IMR-90 (cell line): ENCODE measurements at regions of chr14 and their contacts with region 1.

Region 1: GRCh38 chr14:64109821-64110554 is 184.2 kb downstream of the ESR2 start:
- DNase-seq: peak; percentile 49
- ATAC-seq: peak; percentile 83
- H3K4me3 ChIP-seq: no peak overlapping the region
- H3K27ac ChIP-seq: peak overlapping the region; percentile 49; the same call in 1 of the 2 replicates
- H3K4me1 ChIP-seq: peaks cover 8% of the 10 kb centered on the region
- H3K27me3 ChIP-seq: no peaks in the 10 kb centered on the region
- CTCF ChIP-seq: no peak
- POLR2A ChIP-seq: no peak
- RAD21 ChIP-seq: no peak

Region 2: DNA sequence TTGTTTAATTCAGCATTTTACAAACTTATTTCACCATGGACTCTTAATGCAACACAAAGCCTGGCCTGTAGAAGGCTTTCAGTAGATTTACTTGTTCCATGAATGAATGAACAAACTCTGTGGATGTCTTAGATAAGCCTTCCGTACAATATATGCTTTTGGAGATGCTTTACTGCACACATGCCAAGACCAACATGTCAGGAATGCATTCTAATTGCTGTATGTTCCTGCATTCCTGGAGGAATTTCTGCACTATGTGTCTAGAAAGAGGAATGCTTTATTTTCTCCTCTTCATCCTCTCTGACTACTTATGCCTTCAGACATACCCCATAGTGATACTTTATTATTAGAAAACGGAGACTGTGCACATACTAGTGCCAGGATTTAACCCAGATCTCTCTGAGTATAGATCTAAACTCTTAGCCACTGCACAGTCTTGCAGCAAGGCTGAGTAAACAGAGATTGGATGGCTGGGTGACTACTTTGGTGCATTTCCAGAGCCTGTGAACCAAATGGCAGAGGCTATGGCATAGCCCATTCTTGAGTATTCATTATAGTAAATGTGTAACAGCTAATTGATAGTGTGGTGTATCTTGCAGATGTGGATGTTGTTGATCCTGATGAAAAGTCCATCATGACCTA is 148.9 kb before region 1 on chr14:
- CTCF ChIA-PET with region 1: no interaction called
- POLR2A ChIA-PET with region 1: interaction called, 13 read pairs
- dilution Hi-C with region 1: no loop called
- in situ Hi-C with region 1: no loop called
- intact Hi-C with region 1: no loop called
- DNase-seq: peak; percentile 60
- ATAC-seq: peak; percentile 89
- H3K4me3 ChIP-seq: no peak overlapping the region
- H3K27ac ChIP-seq: no peak overlapping the region
- H3K4me1 ChIP-seq: 0 out of 2 replicates have a peak, but pooled peaks cover 2% of the 10 kb centered on the region
- H3K27me3 ChIP-seq: no peaks in the 10 kb centered on the region
- CTCF ChIP-seq: no peak
- POLR2A ChIP-seq: no peak
- RAD21 ChIP-seq: no peak

Region 3: GRCh38 chr14:64186231-64187129 is 76.5 kb after region 1 on chr14:
- CTCF ChIA-PET with region 1: no interaction called
- POLR2A ChIA-PET with region 1: no interaction called
- dilution Hi-C with region 1: no loop called
- in situ Hi-C with region 1: no loop called
- intact Hi-C with region 1: loop called (anchors 2 kb)
- DNase-seq: no peak
- ATAC-seq: no peak
- H3K4me3 ChIP-seq: no peak overlapping the region
- H3K27ac ChIP-seq: no peak overlapping the region
- H3K4me1 ChIP-seq: peaks cover 3% of the 10 kb centered on the region
- H3K27me3 ChIP-seq: no peaks in the 10 kb centered on the region
- CTCF ChIP-seq: no peak
- POLR2A ChIP-seq: no peak
- RAD21 ChIP-seq: no peak